ENCODE measurements at regions of chr2 and their contacts with region 1.

Region 1: GRCh38 chr2:131492418-131493198 is 411 bp upstream of the MZT2A start:
- DNase-seq: peak; percentile 93
- H3K4me3 ChIP-seq: peak overlapping the region; percentile 64 to 73 (median 73)
- H3K27ac ChIP-seq: peak overlapping the region; percentile 69
- H3K4me1 ChIP-seq: peaks cover 11% of the 10 kb centered on the region
- H3K27me3 ChIP-seq: no peaks in the 10 kb centered on the region
- CTCF ChIP-seq: peak; percentile 58 to 79
- POLR2A ChIP-seq: no peak

Region 2: DNA sequence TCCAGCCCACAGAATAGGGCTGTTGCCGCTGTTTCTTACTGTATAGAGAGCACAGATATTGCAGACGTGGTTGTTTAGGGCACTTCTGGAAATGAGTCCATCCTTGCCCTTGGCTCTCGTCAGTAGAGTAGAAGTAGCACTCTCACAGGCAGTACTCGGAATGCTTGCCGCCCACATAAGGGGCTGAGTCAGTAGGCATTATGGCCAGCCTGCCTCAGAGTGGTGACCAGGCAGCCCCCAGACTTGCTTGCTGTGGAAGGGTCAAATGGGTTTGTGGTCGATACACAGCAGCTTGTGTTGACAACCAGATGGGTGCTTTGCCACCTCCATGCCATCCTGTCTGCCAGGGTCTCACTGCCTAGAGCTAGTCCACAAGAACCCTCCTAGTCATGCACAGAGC is 348.8 kb before region 1 on chr2:
- CTCF ChIA-PET with region 1: no interaction called
- POLR2A ChIA-PET with region 1: no interaction called
- dilution Hi-C with region 1: no loop called
- intact Hi-C with region 1: no loop called
- DNase-seq: no peak
- H3K4me3 ChIP-seq: no peak overlapping the region
- H3K27ac ChIP-seq: no peak overlapping the region
- H3K4me1 ChIP-seq: no peaks in the 10 kb centered on the region
- H3K27me3 ChIP-seq: no peaks in the 10 kb centered on the region
- CTCF ChIP-seq: no peak
- POLR2A ChIP-seq: no peak

Region 3: GRCh38 chr2:131154071-131154531 is 338.5 kb before region 1 on chr2:
- CTCF ChIA-PET with region 1: interaction called, 7 read pairs
- POLR2A ChIA-PET with region 1: no interaction called
- dilution Hi-C with region 1: no loop called
- intact Hi-C with region 1: loop called (anchors 1 kb)
- DNase-seq: peak; percentile 62
- H3K4me3 ChIP-seq: no peak overlapping the region
- H3K27ac ChIP-seq: no peak overlapping the region
- H3K4me1 ChIP-seq: no peaks in the 10 kb centered on the region
- H3K27me3 ChIP-seq: peaks cover 0 to 2% of the 10 kb centered on the region in 2 experiments
- CTCF ChIP-seq: peak; percentile 79 to 84
- POLR2A ChIP-seq: no peak

Region 4: DNA sequence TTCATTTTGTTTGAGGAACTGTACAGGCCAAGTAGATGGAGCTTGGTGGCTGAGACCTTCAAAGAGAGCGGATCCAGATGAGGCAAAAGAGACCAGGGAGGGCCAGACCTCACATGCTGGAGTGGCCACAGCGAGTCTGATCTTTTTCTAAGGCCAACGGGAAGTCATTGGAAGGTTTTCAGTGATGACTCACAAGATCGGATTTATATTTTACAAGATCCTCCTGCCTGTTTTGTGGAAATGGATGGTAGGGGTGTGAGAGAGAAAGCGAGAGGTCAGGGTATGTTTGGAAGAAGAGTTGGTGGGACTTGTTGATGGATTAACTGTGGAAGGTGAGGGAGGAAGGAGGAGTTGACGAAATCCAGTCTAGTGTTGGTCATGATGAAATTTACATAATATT is 61.3 kb before region 1 on chr2:
- CTCF ChIA-PET with region 1: no interaction called
- POLR2A ChIA-PET with region 1: no interaction called
- dilution Hi-C with region 1: no loop called
- intact Hi-C with region 1: no loop called
- DNase-seq: no peak
- H3K4me3 ChIP-seq: no peak overlapping the region
- H3K27ac ChIP-seq: no peak overlapping the region
- H3K4me1 ChIP-seq: no peaks in the 10 kb centered on the region
- H3K27me3 ChIP-seq: peaks cover 23 to 28% of the 10 kb centered on the region in 2 experiments
- CTCF ChIP-seq: no peak
- POLR2A ChIP-seq: no peak

Region 5: GRCh38 chr2:131509615-131510014 is 17.0 kb after region 1 on chr2:
- CTCF ChIA-PET with region 1: interaction called, 20 read pairs
- POLR2A ChIA-PET with region 1: no interaction called
- dilution Hi-C with region 1: no loop called
- intact Hi-C with region 1: no loop called
- DNase-seq: no peak
- H3K4me3 ChIP-seq: no peak overlapping the region
- H3K27ac ChIP-seq: no peak overlapping the region
- H3K4me1 ChIP-seq: no peaks in the 10 kb centered on the region
- H3K27me3 ChIP-seq: no peaks in the 10 kb centered on the region
- CTCF ChIP-seq: no peak
- POLR2A ChIP-seq: no peak

Region 6: GRCh38 chr2:131580187-131580586 is 87.6 kb after region 1 on chr2:
- CTCF ChIA-PET with region 1: no interaction called
- POLR2A ChIA-PET with region 1: no interaction called
- dilution Hi-C with region 1: no loop called
- intact Hi-C with region 1: no loop called
- DNase-seq: no peak
- H3K4me3 ChIP-seq: no peak overlapping the region
- H3K27ac ChIP-seq: no peak overlapping the region
- H3K4me1 ChIP-seq: no peaks in the 10 kb centered on the region
- H3K27me3 ChIP-seq: peaks cover 7% of the 10 kb centered on the region in 2 experiments
- CTCF ChIP-seq: no peak
- POLR2A ChIP-seq: no peak

Region 7: GRCh38 chr2:131590896-131591295 is 98.3 kb after region 1 on chr2:
- CTCF ChIA-PET with region 1: interaction called, 3 read pairs
- POLR2A ChIA-PET with region 1: no interaction called
- dilution Hi-C with region 1: no loop called
- intact Hi-C with region 1: loop called (anchors 2 kb)
- DNase-seq: no peak
- H3K4me3 ChIP-seq: no peak overlapping the region
- H3K27ac ChIP-seq: no peak overlapping the region
- H3K4me1 ChIP-seq: no peaks in the 10 kb centered on the region
- H3K27me3 ChIP-seq: peaks cover 0 to 3% of the 10 kb centered on the region in 2 experiments
- CTCF ChIP-seq: no peak
- POLR2A ChIP-seq: no peak

Region 8: DNA sequence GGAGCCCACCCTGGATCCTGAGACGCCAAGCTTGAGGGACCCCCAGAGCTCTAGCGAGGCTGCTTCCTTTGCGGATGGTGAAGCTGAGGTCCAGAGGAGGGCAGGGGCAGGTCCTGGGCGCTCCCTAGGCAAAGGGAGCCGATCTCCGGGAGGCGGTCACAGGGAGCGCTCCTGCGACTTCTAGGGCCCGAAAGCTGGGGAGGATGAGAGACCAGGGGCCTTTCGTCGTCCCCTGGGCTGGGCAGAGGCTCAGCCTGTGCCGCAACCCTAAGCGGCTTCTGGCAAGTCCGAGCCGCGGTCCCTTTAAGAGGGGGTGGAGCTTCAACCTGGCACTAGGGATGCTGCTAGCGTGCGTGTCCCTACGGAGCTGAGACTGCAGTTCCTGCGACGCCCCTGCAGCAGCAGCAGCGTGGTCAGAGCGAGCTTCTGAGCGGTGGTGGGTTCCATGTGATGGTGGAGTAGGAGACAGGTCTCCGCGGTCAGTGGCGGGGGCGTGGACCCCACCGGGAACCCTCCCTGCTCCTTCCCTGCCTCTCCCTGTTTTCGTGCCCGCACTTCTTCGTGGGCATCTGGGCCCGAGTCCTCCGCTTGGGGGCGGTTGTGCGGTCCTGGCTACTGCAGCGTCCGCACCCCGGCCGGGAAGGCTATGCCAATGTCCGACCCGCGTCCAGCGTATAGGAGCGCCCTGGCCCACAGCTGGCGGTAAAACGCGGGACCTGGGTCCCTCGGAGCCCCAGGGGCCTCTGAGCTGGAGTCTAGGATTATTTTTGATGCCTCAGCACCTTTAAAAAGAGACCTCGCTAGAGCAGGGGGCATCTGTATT is 189.7 kb after region 1 on chr2:
- CTCF ChIA-PET with region 1: interaction called, 13 read pairs
- POLR2A ChIA-PET with region 1: no interaction called
- dilution Hi-C with region 1: no loop called
- intact Hi-C with region 1: no loop called
- DNase-seq: peak; percentile 93
- H3K4me3 ChIP-seq: peak overlapping the region; percentile 57 to 85 (median 81)
- H3K27ac ChIP-seq: peak overlapping the region; percentile 91
- H3K4me1 ChIP-seq: peaks cover 21% of the 10 kb centered on the region
- H3K27me3 ChIP-seq: no peaks in the 10 kb centered on the region
- CTCF ChIP-seq: peak; percentile 10 to 52
- POLR2A ChIP-seq: peak; percentile 98